ENCODE measurements at regions of chr6 and their contacts with region 1.

Region 1: GRCh38 chr6:134174672-134175198 is 122.3 kb upstream of the SLC2A12 start:
- DNase-seq: peak; percentile 95
- ATAC-seq: peak; percentile 85 to 96 (median 91)
- H3K4me3 ChIP-seq: peak overlapping the region; percentile 66 to 85 (median 78)
- H3K27ac ChIP-seq: peak overlapping the region; percentile 97 to 100 (median 98)
- H3K4me1 ChIP-seq: peaks cover 2 to 77% (median 59%) of the 10 kb centered on the region in 9 donors
- H3K27me3 ChIP-seq: no peaks in the 10 kb centered on the region
- CTCF ChIP-seq: peak in 1 of 9 donors; percentile 1

Region 2: DNA sequence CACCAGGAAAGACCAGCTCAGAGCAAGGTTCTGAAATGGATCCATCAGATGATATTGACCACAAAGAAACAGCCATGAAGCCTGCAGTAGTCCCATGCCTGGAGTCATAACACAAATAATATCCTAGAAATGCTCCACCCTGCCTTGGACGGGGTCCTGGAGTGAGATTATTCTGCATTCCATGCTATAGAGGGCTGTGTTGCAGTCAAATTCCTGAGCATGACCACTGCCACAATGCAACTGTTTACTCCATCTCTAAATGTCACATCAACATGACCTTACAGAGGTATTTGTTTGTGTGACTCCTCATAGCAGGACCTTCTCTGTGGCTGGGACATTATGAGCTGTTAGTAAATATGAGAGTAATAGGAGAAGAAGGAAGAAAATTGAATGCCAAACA is 543.3 kb before region 1 on chr6:
- intact Hi-C with region 1: no loop called
- DNase-seq: no peak
- ATAC-seq: no peak
- H3K4me3 ChIP-seq: no peak overlapping the region
- H3K27ac ChIP-seq: no peak overlapping the region
- H3K4me1 ChIP-seq: no peaks in the 10 kb centered on the region
- H3K27me3 ChIP-seq: no peaks in the 10 kb centered on the region
- CTCF ChIP-seq: no peak

Region 3: DNA sequence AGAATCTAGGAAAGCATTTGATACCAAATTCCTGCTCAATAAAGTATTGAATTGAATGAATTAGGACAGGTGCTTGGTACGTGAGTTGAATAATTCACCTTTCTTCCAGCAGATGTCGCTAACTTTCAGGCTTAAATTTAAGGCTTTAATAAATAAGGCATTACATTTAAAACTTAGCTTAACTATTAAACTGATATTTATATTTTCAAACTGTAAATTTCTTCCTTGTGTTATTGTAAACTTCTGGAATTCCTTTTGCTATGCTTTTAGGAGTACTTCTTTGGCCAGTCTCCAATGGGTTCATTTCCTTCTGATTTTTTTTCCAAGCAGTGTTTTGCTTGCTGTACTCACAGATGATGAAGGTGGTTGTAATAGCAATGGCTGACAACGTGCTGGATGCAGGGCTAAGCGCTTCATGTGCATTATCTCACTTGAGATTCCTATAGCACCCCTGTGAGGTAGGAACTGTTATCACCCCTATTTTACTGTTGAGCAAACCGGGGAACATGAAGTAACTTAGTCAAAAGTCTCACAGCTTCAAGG is 51.0 kb before region 1 on chr6:
- intact Hi-C with region 1: no loop called
- DNase-seq: no peak
- ATAC-seq: peak in 1 of 8 donors; percentile 35
- H3K4me3 ChIP-seq: no peak overlapping the region
- H3K27ac ChIP-seq: no peak overlapping the region
- H3K4me1 ChIP-seq: peaks cover 0 to 6% (median 0%) of the 10 kb centered on the region in 9 donors
- H3K27me3 ChIP-seq: no peaks in the 10 kb centered on the region
- CTCF ChIP-seq: peak; percentile 38 to 82 (median 73)

Region 4: GRCh38 chr6:134340179-134340975 is 165.6 kb after region 1 on chr6:
- intact Hi-C with region 1: loop called in 6 of 10 experiments (anchors 1 to 10 kb)
- DNase-seq: no peak
- ATAC-seq: no peak
- H3K4me3 ChIP-seq: no peak overlapping the region
- H3K27ac ChIP-seq: no peak overlapping the region
- H3K4me1 ChIP-seq: peaks cover 0 to 36% (median 11%) of the 10 kb centered on the region in 9 donors
- H3K27me3 ChIP-seq: no peaks in the 10 kb centered on the region
- CTCF ChIP-seq: no peak

Region 5: DNA sequence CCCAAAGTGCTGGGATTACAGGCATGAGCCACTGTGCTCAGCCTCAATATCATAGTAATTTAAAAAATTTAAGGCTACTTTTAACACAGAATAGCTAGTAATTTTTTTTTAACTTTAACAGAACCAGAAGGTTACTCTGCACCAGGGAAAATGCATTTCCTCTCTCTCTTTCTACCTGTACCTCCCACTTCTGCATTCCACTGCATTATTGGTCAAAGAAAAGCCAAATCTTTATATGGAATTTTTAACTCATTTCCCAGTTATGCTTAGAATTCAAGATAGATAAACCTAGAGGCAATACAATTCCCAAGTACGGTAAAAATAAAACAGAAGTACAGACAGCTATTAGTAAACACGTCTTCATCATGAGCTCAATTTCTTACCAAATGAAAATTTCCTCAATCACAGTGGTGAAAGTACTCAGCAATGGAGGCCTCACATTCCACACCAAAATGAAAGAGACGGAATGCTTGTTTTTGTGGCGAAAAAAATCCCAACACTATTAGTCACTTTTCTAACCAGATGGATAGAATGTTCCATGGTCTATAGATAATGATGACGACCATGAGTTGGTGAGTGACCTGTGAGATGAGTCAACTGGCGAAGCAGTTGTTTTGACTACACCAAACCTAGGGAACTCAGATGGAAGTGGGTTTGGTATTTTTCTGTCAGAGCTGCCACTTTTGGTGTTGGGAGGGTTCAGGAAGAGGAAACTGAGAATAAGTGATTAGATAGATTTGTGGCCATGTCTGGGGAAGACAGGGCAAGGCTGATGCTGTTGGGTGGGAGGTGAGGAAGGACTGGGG is 247.9 kb after region 1 on chr6:
- intact Hi-C with region 1: loop called in 1 of 10 experiments (anchors 5 kb)
- DNase-seq: no peak
- ATAC-seq: peak in 3 of 8 donors; percentile 27 to 57 (median 31)
- H3K4me3 ChIP-seq: no peak overlapping the region
- H3K27ac ChIP-seq: peak overlapping the region in 1 of 10 donors; percentile 76
- H3K4me1 ChIP-seq: peaks cover 0 to 35% (median 0%) of the 10 kb centered on the region in 9 donors
- H3K27me3 ChIP-seq: no peaks in the 10 kb centered on the region
- CTCF ChIP-seq: no peak

Region 6: GRCh38 chr6:134529921-134530320 is 355.2 kb after region 1 on chr6:
- intact Hi-C with region 1: loop called in 2 of 10 experiments (anchors 5 kb)
- DNase-seq: no peak
- ATAC-seq: no peak
- H3K4me3 ChIP-seq: no peak overlapping the region
- H3K27ac ChIP-seq: no peak overlapping the region
- H3K4me1 ChIP-seq: peaks cover 0 to 44% (median 21%) of the 10 kb centered on the region in 9 donors
- H3K27me3 ChIP-seq: no peaks in the 10 kb centered on the region
- CTCF ChIP-seq: no peak

Region 7: DNA sequence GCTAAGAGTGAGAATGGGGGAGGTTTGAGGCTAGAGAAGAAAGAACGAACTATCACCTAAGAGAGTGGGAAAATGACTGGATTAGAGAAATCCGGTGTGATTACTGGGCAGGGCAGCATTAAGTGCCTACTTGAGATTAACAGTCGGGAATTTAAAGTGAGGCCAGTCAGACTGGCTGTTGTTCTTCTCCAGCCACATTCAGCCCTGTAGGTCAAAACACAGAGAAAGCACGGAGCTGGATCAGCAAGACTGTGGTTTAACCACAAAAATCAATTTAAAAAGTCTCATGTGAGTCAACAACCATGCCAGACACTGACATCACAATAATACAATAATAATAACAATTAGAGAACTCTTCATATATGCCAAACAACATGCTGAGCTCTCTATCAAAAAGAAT is 445.1 kb after region 1 on chr6:
- intact Hi-C with region 1: no loop called
- DNase-seq: no peak
- ATAC-seq: peak; percentile 55 to 90 (median 77)
- H3K4me3 ChIP-seq: no peak overlapping the region
- H3K27ac ChIP-seq: no peak overlapping the region
- H3K4me1 ChIP-seq: peaks cover 0 to 8% (median 0%) of the 10 kb centered on the region in 9 donors
- H3K27me3 ChIP-seq: no peaks in the 10 kb centered on the region
- CTCF ChIP-seq: no peak

Region 8: GRCh38 chr6:134689641-134690040 is 514.9 kb after region 1 on chr6:
- intact Hi-C with region 1: loop called in 1 of 10 experiments (anchors 1 kb)
- DNase-seq: peak; percentile 45 to 50
- ATAC-seq: peak; percentile 82 to 96 (median 93)
- H3K4me3 ChIP-seq: peak overlapping the region in 5 of 10 donors; percentile 35 to 48 (median 41)
- H3K27ac ChIP-seq: peak overlapping the region in 8 of 10 donors; percentile 32 to 83 (median 70)
- H3K4me1 ChIP-seq: peaks cover 0 to 25% (median 5%) of the 10 kb centered on the region in 9 donors
- H3K27me3 ChIP-seq: no peaks in the 10 kb centered on the region
- CTCF ChIP-seq: no peak

Region 9: DNA sequence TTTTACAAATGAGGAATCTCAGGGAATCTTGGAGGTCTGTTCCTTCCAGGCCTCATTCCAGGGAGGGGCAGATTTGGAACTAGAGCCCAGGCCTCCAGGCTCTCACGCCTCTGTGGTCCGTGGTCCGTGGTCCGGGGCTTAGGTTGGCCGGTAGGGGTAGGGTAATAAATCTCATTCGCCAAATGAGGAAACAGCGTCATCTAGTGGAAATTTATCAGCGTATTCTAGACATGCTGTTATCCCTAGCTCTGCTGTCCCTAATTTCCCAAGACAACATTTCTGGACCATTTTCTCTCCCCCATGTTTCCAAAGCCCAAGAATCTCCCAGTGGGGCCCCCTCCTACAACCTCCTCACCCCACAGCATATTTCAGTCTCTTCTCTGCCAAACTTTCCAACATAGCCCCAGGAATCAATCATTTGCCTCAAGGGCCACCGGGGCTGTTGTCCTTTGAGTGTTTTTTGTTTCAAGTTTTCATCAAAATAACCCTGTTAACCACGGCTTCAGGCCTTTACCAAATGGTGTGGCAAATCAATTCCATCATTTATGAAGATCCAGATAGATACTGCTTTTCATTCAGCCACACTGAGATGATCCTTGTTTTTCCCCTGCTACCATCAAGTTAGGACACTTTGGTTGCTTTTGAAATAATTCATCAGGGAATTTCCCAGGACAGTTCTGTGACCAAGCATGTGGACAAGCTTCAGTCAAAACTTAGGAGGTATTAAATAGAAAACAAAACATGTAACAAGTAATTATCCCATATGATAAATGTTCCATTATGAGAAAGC is 648.4 kb after region 1 on chr6:
- intact Hi-C with region 1: loop called (anchors 1 to 5 kb)
- DNase-seq: peak in 1 of 2 donors; percentile 74
- ATAC-seq: peak; percentile 88 to 96 (median 90)
- H3K4me3 ChIP-seq: no peak overlapping the region
- H3K27ac ChIP-seq: no peak overlapping the region
- H3K4me1 ChIP-seq: peaks cover 0 to 25% (median 12%) of the 10 kb centered on the region in 9 donors
- H3K27me3 ChIP-seq: no peaks in the 10 kb centered on the region
- CTCF ChIP-seq: peak; percentile 78 to 93 (median 88)